Left ventricle myocardium superior (tissue), 1 donor: ENCODE measurements at regions of chr3 and their contacts with region 1.

Region 1: DNA sequence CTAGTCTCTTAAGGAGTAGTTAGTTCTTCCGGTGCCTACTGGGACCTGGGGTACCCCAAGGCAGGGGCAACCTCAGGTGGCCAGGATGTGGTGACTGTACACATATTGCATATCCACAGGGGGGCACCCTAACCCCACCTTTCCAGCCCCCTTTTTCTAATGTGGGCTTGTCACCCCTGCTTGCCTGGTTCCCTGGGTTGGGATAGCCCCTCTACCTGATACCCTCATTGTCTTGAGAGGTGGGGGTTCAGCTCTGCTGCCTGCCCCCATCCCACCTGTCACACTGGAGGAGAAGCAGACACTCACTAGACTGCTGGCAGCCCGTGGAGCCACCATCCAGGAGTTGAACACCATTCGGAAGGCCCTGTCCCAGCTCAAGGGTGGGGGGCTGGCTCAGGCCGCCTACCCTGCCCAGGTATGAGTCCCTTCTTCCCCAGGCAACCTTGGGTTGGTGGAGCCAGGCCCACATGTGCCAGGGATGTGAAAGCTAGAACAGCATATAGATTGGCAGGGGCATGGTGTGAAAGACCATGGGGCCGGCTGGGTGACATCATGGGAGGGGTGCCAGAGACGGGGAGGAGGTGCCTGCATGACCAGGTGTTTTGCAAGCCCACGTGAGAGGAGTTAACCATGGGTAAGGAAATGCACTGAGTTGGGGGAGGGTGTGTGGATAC is 4.0 kb downstream of the GLYCTK start:
- DNase-seq: no peak
- ATAC-seq: no peak

Region 2: DNA sequence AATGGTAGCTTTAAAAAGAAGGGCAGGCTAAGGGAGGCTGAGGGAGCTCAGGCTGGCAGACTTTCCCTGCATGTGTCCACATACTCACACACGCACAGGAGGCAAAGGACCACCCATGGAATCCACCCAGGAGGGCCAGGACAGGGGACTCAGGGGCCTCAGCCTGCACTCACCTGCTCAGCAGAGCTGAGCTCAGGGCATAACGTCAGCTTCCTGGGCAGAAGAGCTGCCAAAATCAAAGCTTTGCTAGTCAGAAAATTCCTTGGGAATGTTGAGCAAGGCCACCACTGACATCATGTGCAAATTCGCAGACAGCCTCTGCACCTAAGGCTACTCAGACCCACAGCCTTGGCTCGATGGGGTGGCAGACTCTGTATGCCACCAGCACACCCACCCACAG is 110.1 kb before region 1 on chr3:
- intact Hi-C with region 1: no loop called
- DNase-seq: no peak
- ATAC-seq: no peak

Region 3: GRCh38 chr3:52339612-52340011 is 48.0 kb after region 1 on chr3:
- intact Hi-C with region 1: loop called (anchors 2 kb)
- DNase-seq: peak; percentile 11
- ATAC-seq: peak; percentile 63